ENCODE measurements at regions of chr9 and their contacts with region 1.

Region 1: DNA sequence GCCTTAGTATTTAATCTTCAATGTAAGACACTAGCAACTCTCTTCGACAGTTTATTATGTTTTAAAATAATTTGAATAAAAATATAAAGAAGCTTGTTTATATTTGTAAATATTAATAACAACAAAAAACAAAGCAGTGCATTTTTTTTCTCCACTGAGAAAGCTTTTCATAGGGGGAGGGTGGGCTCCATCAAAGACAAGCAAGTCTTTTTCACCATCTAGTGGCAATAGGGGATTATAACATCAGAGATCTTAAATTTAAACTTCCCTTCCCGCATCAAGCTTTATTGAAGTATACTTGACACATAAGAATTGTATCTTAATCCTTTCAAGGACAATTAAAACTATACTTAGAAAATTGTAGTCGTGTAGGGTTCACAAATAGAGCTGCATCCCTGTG is 9.3 kb upstream of the OR13F1 start:
- DNase-seq: no peak
- H3K4me3 ChIP-seq: no peak overlapping the region
- H3K27ac ChIP-seq: no peak overlapping the region
- H3K4me1 ChIP-seq: no peaks in the 10 kb centered on the region
- H3K27me3 ChIP-seq: no peaks in the 10 kb centered on the region
- CTCF ChIP-seq: peak; percentile 14 to 23

Region 2: GRCh38 chr9:104177003-104177611 is 317.7 kb before region 1 on chr9:
- CTCF ChIA-PET with region 1: no interaction called
- dilution Hi-C with region 1: no loop called
- in situ Hi-C with region 1: no loop called
- intact Hi-C with region 1: loop called (anchors 5 kb)
- DNase-seq: peak; percentile 32
- H3K4me3 ChIP-seq: no peak overlapping the region
- H3K27ac ChIP-seq: no peak overlapping the region
- H3K4me1 ChIP-seq: no peaks in the 10 kb centered on the region
- H3K27me3 ChIP-seq: no peaks in the 10 kb centered on the region
- CTCF ChIP-seq: peak; percentile 67 to 76

Region 3: DNA sequence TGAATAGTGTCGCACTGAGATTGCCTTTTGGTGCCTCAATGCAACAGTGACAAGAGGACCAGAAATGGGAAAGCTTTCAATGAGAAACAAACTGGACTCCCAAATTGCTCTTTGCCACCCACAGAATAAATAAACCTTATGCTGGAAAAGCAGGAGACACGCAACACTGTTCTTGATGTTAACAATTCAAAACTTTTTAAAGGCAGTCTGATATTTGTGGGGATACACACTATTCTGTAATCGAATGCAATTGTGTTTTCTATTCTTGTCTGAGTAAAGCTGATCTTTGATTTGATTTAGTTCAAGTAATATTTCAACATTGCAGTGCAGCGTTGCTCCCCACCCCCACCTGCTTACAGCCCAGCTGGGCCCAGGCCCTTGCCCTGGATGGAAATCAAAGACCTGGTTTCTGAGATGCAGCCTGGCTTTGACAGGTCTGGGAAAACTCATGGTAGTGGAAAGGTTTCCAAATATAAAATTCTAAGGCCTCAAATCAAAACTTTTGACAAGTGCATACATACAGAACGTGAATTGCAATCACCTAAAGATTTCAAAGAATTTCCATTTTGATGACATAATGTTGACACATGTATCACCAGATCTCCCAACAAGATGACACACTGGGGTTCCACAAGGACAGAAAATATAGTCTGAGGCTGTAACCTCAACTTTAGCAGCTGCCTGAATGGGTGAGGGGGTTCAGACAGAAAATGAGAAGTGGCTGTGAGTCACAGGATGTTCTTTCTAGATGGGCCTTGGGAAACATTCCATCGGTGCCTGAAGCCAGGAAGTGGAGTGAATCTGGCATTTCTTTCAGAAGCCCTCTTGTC is 378.1 kb after region 1 on chr9:
- CTCF ChIA-PET with region 1: interaction called, 11 read pairs
- dilution Hi-C with region 1: no loop called
- in situ Hi-C with region 1: no loop called
- intact Hi-C with region 1: no loop called
- DNase-seq: peak; percentile 97
- H3K4me3 ChIP-seq: no peak overlapping the region
- H3K27ac ChIP-seq: peak overlapping the region; percentile 68
- H3K4me1 ChIP-seq: peaks cover 54% of the 10 kb centered on the region
- H3K27me3 ChIP-seq: no peaks in the 10 kb centered on the region
- CTCF ChIP-seq: no peak

Measured in mammary epithelial cell (primary cell).